Activated CD4-positive, alpha-beta memory T cell treated with anti-CD3 and anti-CD28 coated beads for 36 hours (primary cell): ENCODE measurements at regions of chr19 and their contacts with region 1.

Region 1: GRCh38 chr19:47514869-47515588 is at the start of gene NAPA:
- DNase-seq: peak; percentile 100
- H3K4me3 Mint-ChIP-seq: peak within 1 kb of the TSS; percentile 98
- H3K27ac Mint-ChIP-seq: peak within 1 kb of the TSS; percentile 95
- H3K4me1 Mint-ChIP-seq: peaks cover 74% of the 10 kb centered on the region
- H3K27me3 Mint-ChIP-seq: no peaks in the 10 kb centered on the region
- total RNA-seq, gene NAPA: 67.3 to 70.4 TPM

Region 2: GRCh38 chr19:47436712-47437401 is 78.2 kb before region 1 on chr19:
- CTCF ChIA-PET with region 1: interaction called, 53 read pairs
- POLR2A ChIA-PET with region 1: no interaction called
- intact Hi-C with region 1: loop called (anchors 1 kb)
- DNase-seq: peak; percentile 89
- H3K4me3 Mint-ChIP-seq: no peak overlapping the region
- H3K27ac Mint-ChIP-seq: no peak overlapping the region
- H3K4me1 Mint-ChIP-seq: peaks cover 15% of the 10 kb centered on the region
- H3K27me3 Mint-ChIP-seq: peaks cover 38% of the 10 kb centered on the region

Region 3: GRCh38 chr19:47573071-47574026 is 58.3 kb after region 1 on chr19 and contains the start of gene ZNF541:
- CTCF ChIA-PET with region 1: interaction called, 3 read pairs
- POLR2A ChIA-PET with region 1: no interaction called
- intact Hi-C with region 1: loop called (anchors 10 kb)
- DNase-seq: peak; percentile 85
- H3K4me3 Mint-ChIP-seq: peak within 1 kb of the TSS; percentile 12
- H3K27ac Mint-ChIP-seq: no peak within 1 kb of the TSS
- H3K4me1 Mint-ChIP-seq: peaks cover 18% of the 10 kb centered on the region
- H3K27me3 Mint-ChIP-seq: no peaks in the 10 kb centered on the region
- total RNA-seq, gene ZNF541: 0.07 to 0.31 TPM

Region 4: GRCh38 chr19:47608074-47608918 is 93.3 kb after region 1 on chr19:
- CTCF ChIA-PET with region 1: interaction called, 6 read pairs
- POLR2A ChIA-PET with region 1: interaction called, 4 read pairs
- intact Hi-C with region 1: loop called (anchors 2 kb)
- DNase-seq: peak; percentile 97
- H3K4me3 Mint-ChIP-seq: peak overlapping the region; percentile 84
- H3K27ac Mint-ChIP-seq: peak overlapping the region; percentile 80
- H3K4me1 Mint-ChIP-seq: peaks cover 34% of the 10 kb centered on the region
- H3K27me3 Mint-ChIP-seq: no peaks in the 10 kb centered on the region

Region 5: GRCh38 chr19:48321622-48322591 is 806.9 kb after region 1 on chr19:
- CTCF ChIA-PET with region 1: no interaction called
- POLR2A ChIA-PET with region 1: no interaction called
- intact Hi-C with region 1: loop called (anchors 10 kb)
- DNase-seq: peak; percentile 99
- H3K4me3 Mint-ChIP-seq: peak overlapping the region; percentile 88
- H3K27ac Mint-ChIP-seq: peak overlapping the region; percentile 99
- H3K4me1 Mint-ChIP-seq: peaks cover 51% of the 10 kb centered on the region
- H3K27me3 Mint-ChIP-seq: no peaks in the 10 kb centered on the region